ENCODE measurements at regions of chrX and their contacts with region 1.

Region 1: GRCh38 chrX:97685753-97686152 is 802.0 kb downstream of the RPA4 start:
- DNase-seq: peak; percentile 40
- ATAC-seq: peak; percentile 66; the same call in 1 of the 2 replicates
- H3K4me3 ChIP-seq: no peak overlapping the region
- H3K27ac ChIP-seq: no peak overlapping the region
- H3K4me1 ChIP-seq: no peaks in the 10 kb centered on the region
- H3K27me3 ChIP-seq: no peaks in the 10 kb centered on the region; the same call in none of the 2 replicates
- CTCF ChIP-seq: peak; percentile 63
- POLR2A ChIP-seq: no peak
- RAD21 ChIP-seq: peak; percentile 60

Region 2: GRCh38 chrX:96770315-96770714 is 915.4 kb before region 1 on chrX:
- CTCF ChIA-PET with region 1: interaction called, 3 read pairs
- POLR2A ChIA-PET with region 1: no interaction called
- dilution Hi-C with region 1: no loop called
- in situ Hi-C with region 1: loop called (anchors 25 kb)
- intact Hi-C with region 1: loop called (anchors 2 kb)
- DNase-seq: peak; percentile 18
- ATAC-seq: no peak
- H3K4me3 ChIP-seq: no peak overlapping the region
- H3K27ac ChIP-seq: no peak overlapping the region
- H3K4me1 ChIP-seq: no peaks in the 10 kb centered on the region
- H3K27me3 ChIP-seq: no peaks in the 10 kb centered on the region
- CTCF ChIP-seq: peak; percentile 62
- POLR2A ChIP-seq: no peak
- RAD21 ChIP-seq: peak; percentile 72

Region 3: DNA sequence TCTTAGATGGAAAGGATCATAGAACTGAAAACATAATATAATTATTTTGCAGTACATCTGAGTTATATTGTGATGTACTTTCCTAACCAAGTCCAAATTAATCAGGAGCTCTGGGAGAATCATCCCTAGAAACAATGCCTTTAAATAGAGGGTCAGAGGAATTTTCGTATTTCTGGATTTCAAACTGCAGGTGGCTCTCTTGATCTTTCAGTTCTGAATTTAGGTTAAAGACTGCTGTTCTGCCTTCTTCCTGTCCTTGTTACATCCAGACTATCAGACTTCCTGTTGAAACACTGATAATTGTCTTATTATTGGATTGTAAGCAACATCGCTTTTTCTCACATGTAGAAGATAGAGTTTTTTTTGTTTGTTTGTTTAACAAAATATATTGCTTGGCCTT is 659.3 kb before region 1 on chrX:
- CTCF ChIA-PET with region 1: no interaction called
- POLR2A ChIA-PET with region 1: no interaction called
- dilution Hi-C with region 1: no loop called
- in situ Hi-C with region 1: no loop called
- intact Hi-C with region 1: loop called (anchors 10 kb)
- DNase-seq: peak; percentile 5
- ATAC-seq: no peak
- H3K4me3 ChIP-seq: no peak overlapping the region
- H3K27ac ChIP-seq: no peak overlapping the region
- H3K4me1 ChIP-seq: no peaks in the 10 kb centered on the region
- H3K27me3 ChIP-seq: no peaks in the 10 kb centered on the region
- CTCF ChIP-seq: peak; percentile 21; the same call in 1 of the 2 replicates
- POLR2A ChIP-seq: no peak
- RAD21 ChIP-seq: peak; percentile 20; the same call in 1 of the 2 replicates

Region 4: DNA sequence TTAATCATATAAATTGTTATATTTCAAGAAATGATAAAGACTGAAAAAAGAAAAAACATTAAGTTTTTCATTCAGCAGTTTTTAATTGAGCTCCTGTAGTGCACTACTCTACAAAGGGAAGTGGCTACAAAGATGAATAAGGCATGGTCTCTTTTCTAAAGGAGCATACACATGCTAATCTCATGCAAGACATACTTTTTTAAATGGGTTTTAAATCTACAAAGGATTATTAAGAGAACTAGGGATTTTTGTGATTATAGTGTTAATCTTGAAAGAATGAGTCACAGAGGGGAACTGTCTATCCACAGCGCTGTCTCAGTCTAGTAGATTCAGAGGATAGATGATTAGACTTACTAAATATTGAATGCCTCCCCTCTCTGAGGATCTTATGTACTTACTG is 920.2 kb after region 1 on chrX:
- CTCF ChIA-PET with region 1: no interaction called
- POLR2A ChIA-PET with region 1: no interaction called
- dilution Hi-C with region 1: no loop called
- in situ Hi-C with region 1: no loop called
- intact Hi-C with region 1: no loop called
- DNase-seq: no peak
- ATAC-seq: no peak
- H3K4me3 ChIP-seq: no peak overlapping the region
- H3K27ac ChIP-seq: no peak overlapping the region
- H3K4me1 ChIP-seq: no peaks in the 10 kb centered on the region
- H3K27me3 ChIP-seq: no peaks in the 10 kb centered on the region
- CTCF ChIP-seq: no peak
- POLR2A ChIP-seq: no peak
- RAD21 ChIP-seq: no peak

Measured in IMR-90 (cell line).